HAP-1 (cell line): ENCODE measurements at regions of chr17 and their contacts with region 1.

Region 1: DNA sequence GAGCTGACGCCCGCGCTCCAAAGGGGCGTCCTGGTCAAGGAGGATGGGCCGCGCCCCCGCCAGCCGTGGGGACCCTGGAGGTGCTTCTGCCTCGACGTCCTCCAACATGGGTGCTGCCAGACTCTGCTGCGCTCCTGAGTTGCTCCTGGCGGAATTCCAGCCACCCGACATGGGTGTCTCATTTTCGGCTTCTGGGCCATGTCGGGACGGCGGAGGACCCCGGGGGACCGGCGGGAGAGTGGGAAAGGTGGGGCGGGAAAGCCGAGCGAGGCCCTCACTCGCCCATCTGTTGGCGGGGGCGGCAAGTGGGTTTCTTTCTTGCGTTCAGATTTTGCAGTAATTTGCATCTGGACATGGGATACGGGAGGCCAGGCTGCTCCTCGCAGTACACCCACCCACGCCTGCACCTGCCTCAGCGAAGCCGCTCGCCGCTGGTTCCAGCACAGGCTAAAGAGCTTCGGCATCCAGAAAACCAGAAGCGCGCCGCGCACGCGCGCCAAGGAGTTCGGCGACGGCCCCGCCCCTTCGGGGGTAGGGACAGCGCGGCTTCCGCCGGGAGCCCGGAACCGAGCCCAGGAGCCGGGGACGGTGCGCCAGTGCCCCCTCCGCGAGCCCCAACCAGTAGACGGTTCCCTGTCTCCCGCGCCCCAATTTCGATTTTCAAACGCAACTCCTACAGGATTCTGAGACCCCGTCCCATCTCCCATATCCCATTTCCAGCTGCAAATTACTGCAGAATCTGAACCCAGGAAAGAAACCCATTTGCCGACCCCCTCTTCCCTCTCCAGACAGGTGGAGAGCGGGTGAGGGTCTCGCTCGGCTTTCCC is at the start of gene ARMC7:
- DNase-seq: peak; percentile 82 to 95
- H3K4me3 ChIP-seq: peak within 1 kb of the TSS; percentile 65
- H3K4me1 ChIP-seq: peaks cover 18% of the 10 kb centered on the region
- H3K27me3 ChIP-seq: no peaks in the 10 kb centered on the region

Region 2: DNA sequence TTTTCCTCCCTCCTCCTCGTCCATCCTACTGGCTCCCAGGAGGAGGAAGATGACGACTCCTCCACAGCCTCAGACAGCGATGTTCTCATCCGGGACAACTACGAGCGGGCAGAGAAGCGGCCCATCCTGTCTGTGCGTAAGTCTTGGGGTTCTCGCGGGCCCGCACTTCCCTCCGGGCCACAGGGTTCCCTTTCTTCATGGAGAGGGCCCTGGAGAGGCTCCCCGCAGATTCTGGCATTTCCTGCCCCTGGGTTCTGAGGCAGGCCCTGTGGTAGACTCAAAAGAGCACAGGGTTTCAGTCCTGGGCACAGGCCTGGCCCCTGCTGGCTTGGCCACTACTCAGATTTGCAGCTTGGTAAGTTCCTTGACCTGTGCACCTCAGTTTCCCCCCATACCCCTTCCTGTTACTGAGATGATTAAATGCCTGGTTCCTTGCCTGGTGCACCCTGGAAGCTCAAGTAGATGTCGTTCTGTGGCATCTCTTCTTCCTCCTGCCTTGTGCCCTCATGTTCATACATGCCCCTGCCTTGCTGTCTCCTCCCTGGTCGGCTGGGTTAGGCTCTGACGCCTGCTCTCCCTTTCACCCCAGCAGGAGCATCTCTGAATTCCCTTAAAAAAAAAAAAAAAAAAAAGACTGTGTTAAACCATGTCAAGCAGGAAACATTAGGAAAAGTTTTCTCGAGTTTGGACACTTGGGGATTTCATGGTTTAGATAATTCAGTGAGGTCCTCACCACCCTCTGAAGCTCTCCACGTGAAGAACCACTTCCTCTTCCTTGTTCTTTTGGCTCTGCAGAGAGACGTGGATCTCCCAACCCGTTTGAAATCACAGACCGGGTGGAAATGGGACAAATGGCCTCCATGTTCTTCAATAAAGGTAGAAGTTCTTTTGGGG is 319.2 kb before region 1 on chr17:
- in situ Hi-C with region 1: no loop called
- DNase-seq: no peak
- H3K4me3 ChIP-seq: no peak overlapping the region
- H3K4me1 ChIP-seq: no peaks in the 10 kb centered on the region
- H3K27me3 ChIP-seq: no peaks in the 10 kb centered on the region

Region 3: DNA sequence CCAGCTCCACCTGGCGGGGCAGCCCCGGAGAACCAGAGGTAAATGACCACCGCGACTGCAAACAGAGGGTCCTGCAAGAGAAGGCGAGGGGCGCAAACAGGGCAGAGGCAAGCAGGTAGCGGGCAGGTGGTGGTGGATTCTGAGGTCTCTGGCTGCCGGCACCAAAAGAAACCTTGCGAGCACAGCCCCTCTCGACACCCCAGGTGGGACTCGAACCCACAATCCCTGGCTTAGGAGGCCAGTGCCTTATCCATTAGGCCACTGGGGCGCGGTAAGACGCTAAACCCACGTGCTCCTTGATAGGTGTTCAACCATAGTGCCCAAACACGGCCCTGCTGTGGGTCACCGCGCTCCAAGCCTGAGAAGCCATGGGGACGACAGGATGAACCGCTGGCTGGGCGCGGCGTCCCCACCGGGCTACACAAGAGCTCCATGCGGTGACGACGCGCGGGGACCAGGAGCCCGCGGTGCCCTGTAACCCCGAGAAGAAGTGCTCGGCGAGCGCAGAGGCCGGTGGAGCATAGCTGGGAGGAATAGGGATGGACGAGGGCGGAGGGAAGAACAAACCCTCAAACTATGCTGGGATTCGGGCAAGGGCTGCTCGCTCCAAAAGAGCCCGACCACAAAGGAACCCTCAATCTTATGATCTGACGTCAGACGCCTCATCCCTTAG is 75.2 kb before region 1 on chr17:
- in situ Hi-C with region 1: no loop called
- DNase-seq: peak; percentile 88 to 96
- H3K4me3 ChIP-seq: peak overlapping the region; percentile 58
- H3K4me1 ChIP-seq: peaks cover 10% of the 10 kb centered on the region
- H3K27me3 ChIP-seq: no peaks in the 10 kb centered on the region

Region 4: GRCh38 chr17:75405365-75406221 is 296.0 kb after region 1 on chr17 and contains the start of gene GRB2:
- in situ Hi-C with region 1: loop called (anchors 25 kb)
- DNase-seq: peak; percentile 97 to 99
- H3K4me3 ChIP-seq: peak within 1 kb of the TSS; percentile 98
- H3K4me1 ChIP-seq: peaks cover 11% of the 10 kb centered on the region
- H3K27me3 ChIP-seq: 0 out of 2 replicates have a peak, but pooled peaks cover 2% of the 10 kb centered on the region